ENCODE measurements at regions of chr7 and their contacts with region 1.

Region 1: GRCh38 chr7:16989811-16990413 is 108.1 kb upstream of the AGR3 start:
- DNase-seq: peak; percentile 69
- ATAC-seq: peak; percentile 80 to 88

Region 2: GRCh38 chr7:16463520-16463919 is 526.4 kb before region 1 on chr7:
- intact Hi-C with region 1: no loop called
- DNase-seq: no peak
- ATAC-seq: no peak

Region 3: GRCh38 chr7:17530741-17531417 is 541.0 kb after region 1 on chr7:
- intact Hi-C with region 1: loop called in 1 of 2 experiments (anchors 10 kb)
- DNase-seq: no peak
- ATAC-seq: peak in 1 of 2 donors; percentile 45

Measured in left cardiac atrium (tissue), 4 donors.